ENCODE measurements at regions of chr4 and their contacts with region 1.

Region 1: GRCh38 chr4:48681856-48682255 is 98.2 kb downstream of the FRYL start:
- DNase-seq: no peak
- ATAC-seq: peak; percentile 24 to 63
- H3K4me3 ChIP-seq: no peak overlapping the region
- H3K27ac ChIP-seq: no peak overlapping the region
- H3K4me1 ChIP-seq: no peaks in the 10 kb centered on the region
- H3K27me3 ChIP-seq: no peaks in the 10 kb centered on the region

Region 2: DNA sequence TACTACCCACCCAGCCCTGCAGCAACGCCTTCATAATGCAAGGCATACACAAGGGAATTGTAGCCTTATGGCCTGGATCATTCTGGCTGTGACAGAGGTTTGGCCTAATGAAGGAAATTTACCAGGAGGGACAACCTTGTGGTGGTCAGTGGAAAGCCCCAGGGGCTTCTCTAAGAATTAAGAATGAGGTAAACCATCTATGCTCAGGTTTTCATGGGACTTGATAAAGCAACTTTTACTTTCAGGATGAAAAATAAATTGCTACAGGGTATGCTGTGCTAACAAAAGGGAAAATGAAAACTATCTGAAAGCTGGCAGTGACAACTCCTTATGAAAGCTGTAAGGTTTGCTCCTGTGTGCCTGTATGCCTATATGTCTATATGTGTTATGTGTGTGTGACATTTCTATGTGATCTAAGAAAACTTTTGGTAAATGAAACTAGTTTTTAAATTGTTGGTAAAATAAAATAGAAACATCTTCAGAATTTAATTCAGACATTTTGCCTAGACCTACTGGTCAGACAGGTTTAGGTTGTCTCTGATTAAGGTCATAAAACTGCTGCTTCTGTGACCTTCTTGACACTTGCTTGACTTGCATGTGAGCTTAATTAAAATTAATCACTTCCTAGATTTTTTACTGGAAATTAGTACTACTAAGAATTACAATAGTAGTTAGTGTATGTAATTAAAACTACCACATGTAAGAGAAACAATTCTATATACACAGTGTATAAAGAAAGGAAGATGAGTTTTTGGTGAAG is 527.9 kb before region 1 on chr4:
- intact Hi-C with region 1: no loop called
- DNase-seq: no peak
- ATAC-seq: no peak
- H3K4me3 ChIP-seq: no peak overlapping the region
- H3K27ac ChIP-seq: no peak overlapping the region
- H3K4me1 ChIP-seq: no peaks in the 10 kb centered on the region
- H3K27me3 ChIP-seq: no peaks in the 10 kb centered on the region

Region 3: GRCh38 chr4:48588230-48589097 is 93.4 kb before region 1 on chr4:
- intact Hi-C with region 1: loop called in 1 of 4 experiments (anchors 10 kb)
- DNase-seq: no peak
- ATAC-seq: no peak
- H3K4me3 ChIP-seq: no peak overlapping the region
- H3K27ac ChIP-seq: no peak overlapping the region
- H3K4me1 ChIP-seq: no peaks in the 10 kb centered on the region
- H3K27me3 ChIP-seq: no peaks in the 10 kb centered on the region

Measured in right cardiac atrium (tissue), 5 donors.